ENCODE measurements at regions of chr3 and their contacts with region 1.

Region 1: GRCh38 chr3:4284865-4285264 is 18.3 kb upstream of the SETMAR start:
- DNase-seq: no peak
- H3K4me3 ChIP-seq: no peak overlapping the region
- H3K27ac ChIP-seq: no peak overlapping the region
- H3K4me1 ChIP-seq: no peaks in the 10 kb centered on the region
- H3K27me3 ChIP-seq: no peaks in the 10 kb centered on the region
- CTCF ChIP-seq: no peak

Region 2: GRCh38 chr3:3200632-3201212 is 1084.1 kb before region 1 on chr3:
- intact Hi-C with region 1: loop called (anchors 10 kb)
- DNase-seq: peak in 4 of 5 donors; percentile 65 to 93 (median 79)
- H3K4me3 ChIP-seq: no peak overlapping the region
- H3K27ac ChIP-seq: no peak overlapping the region
- H3K4me1 ChIP-seq: no peaks in the 10 kb centered on the region
- H3K27me3 ChIP-seq: no peaks in the 10 kb centered on the region
- CTCF ChIP-seq: peak; percentile 79

Region 3: DNA sequence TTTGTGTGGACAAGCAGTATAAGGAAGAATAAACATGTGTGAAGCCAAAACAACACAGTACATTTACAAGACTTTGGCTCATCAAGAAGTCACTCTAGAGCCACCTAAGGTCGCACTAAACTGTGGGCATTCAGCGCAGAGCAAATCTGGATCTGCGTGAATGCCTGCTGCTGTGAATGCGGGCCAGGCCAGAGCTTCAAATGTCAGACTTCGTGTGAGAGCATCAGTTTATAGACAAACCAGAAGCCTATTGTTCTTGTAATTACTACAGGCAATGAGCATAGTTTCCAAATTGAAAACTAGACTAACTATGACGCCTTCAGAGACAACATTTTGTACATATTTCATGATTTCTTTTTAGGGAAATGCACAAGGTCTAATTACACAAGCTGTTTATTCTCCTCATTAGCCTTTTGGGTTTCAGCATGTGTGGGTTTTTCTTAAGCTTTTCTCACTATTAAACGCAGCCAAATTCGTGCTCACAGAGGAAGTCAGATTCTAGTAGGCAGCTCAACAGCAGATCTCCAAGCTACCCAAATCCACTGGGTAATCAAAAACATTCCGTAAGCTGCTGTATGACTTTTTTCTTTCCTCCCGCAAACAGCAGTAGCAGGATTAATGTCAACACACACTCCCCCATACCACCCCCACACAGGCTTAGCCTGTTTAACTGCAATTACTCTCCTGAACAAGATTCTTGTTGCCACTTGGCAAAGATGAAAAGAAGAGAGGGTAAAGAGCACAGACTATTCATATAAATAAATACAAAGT is 66.2 kb before region 1 on chr3:
- intact Hi-C with region 1: no loop called
- DNase-seq: peak in 4 of 5 donors; percentile 57 to 73 (median 68)
- H3K4me3 ChIP-seq: no peak overlapping the region
- H3K27ac ChIP-seq: no peak overlapping the region
- H3K4me1 ChIP-seq: no peaks in the 10 kb centered on the region
- H3K27me3 ChIP-seq: no peaks in the 10 kb centered on the region
- CTCF ChIP-seq: no peak